Aorta (tissue), 5 donors: ENCODE measurements at regions of chr10 and their contacts with region 1.

Region 1: GRCh38 chr10:125048101-125048864 is 106.4 kb downstream of the ZRANB1 start:
- DNase-seq: peak; percentile 91 to 95
- ATAC-seq: peak; percentile 92
- H3K4me3 ChIP-seq: no peak overlapping the region
- H3K27ac ChIP-seq: no peak overlapping the region
- H3K4me1 ChIP-seq: no peaks in the 10 kb centered on the region
- H3K27me3 ChIP-seq: no peaks in the 10 kb centered on the region

Region 2: DNA sequence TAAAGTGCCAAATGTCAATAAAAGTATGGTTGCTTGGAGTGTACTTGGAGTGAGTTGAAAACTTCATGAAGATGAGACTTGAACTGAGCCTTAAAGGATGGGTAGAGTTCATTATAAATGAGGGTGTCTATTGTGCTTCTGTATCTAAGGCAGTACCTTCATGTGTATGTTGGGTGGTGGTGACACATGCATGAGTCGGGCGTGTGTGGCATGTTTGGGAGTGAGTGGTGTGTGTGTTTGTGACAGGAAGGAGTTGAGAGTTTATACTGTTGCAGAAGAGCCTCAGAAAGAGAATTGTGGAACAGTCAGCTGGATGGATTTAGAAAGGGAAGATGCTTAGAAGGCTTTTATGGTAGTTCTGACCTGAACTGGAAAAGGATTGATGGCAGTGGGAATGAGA is 112.3 kb before region 1 on chr10:
- intact Hi-C with region 1: no loop called
- DNase-seq: no peak
- ATAC-seq: no peak
- H3K4me3 ChIP-seq: no peak overlapping the region
- H3K27ac ChIP-seq: no peak overlapping the region
- H3K4me1 ChIP-seq: peaks cover 3% of the 10 kb centered on the region in 2 donors
- H3K27me3 ChIP-seq: no peaks in the 10 kb centered on the region

Region 3: GRCh38 chr10:125343118-125343925 is 295.0 kb after region 1 on chr10:
- intact Hi-C with region 1: loop called (anchors 5 to 10 kb)
- DNase-seq: no peak
- ATAC-seq: no peak
- H3K4me3 ChIP-seq: no peak overlapping the region
- H3K27ac ChIP-seq: no peak overlapping the region
- H3K4me1 ChIP-seq: no peaks in the 10 kb centered on the region
- H3K27me3 ChIP-seq: no peaks in the 10 kb centered on the region